Activated CD4-positive, alpha-beta T cell treated with anti-CD3 and anti-CD28 coated beads for 36 hours (primary cell): ENCODE measurements at regions of chr6 and their contacts with region 1.

Region 1: DNA sequence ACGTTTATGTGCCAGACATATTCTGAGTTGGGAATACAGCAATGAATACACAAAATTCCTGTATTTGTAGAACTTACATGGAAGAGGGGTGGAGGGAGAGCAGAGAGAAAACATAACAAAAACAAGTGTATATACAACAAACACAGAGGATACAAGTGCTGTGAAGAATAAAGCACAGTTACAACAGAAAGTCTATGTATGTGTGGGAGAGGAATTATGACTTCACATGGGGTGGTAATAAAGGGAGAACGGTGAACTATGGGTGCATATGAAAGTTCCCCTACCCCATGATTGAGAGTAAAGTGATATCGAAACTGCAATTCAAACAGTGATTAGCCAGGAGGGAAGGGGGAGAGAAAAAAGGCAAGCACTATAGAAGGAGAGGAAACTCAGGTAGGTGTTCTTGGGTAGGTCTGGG is 24.6 kb downstream of the HBS1L start:
- DNase-seq: no peak
- ATAC-seq: peak; percentile 97
- H3K4me3 Mint-ChIP-seq: peak overlapping the region; percentile 54
- H3K27ac Mint-ChIP-seq: peak overlapping the region; percentile 75
- H3K4me1 Mint-ChIP-seq: peaks cover 69% of the 10 kb centered on the region
- H3K27me3 Mint-ChIP-seq: no peaks in the 10 kb centered on the region

Region 2: DNA sequence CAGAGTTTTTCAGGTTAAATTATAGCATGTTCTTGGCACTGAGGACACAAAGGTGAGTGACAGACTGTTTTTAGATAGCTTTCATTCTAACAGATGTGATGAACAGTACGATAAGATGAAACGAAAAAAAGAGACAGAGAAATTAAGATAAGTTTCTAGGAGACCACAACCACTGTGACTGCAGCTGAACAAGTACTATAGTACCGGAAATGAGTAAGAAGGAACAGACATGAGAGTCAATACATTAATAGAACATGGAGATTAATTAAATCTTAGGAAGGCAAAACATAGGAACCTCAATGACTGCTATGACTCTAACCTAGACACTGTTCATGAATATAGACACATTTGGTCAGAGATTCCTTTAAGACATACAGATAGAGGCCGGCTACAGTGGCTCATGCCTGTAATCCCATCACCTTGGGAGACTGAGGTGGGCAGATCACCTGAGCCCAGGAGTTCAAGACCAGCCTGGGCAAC is 15.7 kb before region 1 on chr6:
- CTCF ChIA-PET with region 1: interaction called, 4 read pairs
- POLR2A ChIA-PET with region 1: no interaction called
- intact Hi-C with region 1: loop called (anchors 1 kb)
- DNase-seq: peak; percentile 23
- ATAC-seq: peak; percentile 87
- H3K4me3 Mint-ChIP-seq: peak overlapping the region; percentile 18
- H3K27ac Mint-ChIP-seq: peak overlapping the region; percentile 45
- H3K4me1 Mint-ChIP-seq: peaks cover 59% of the 10 kb centered on the region
- H3K27me3 Mint-ChIP-seq: no peaks in the 10 kb centered on the region

Region 3: GRCh38 chr6:135162678-135163439 is 132.8 kb after region 1 on chr6:
- CTCF ChIA-PET with region 1: no interaction called
- POLR2A ChIA-PET with region 1: no interaction called
- intact Hi-C with region 1: loop called in 1 of 2 experiments (anchors 1 kb)
- DNase-seq: peak; percentile 67
- ATAC-seq: no peak
- H3K4me3 Mint-ChIP-seq: peak overlapping the region; percentile 24
- H3K27ac Mint-ChIP-seq: peak overlapping the region; percentile 94
- H3K4me1 Mint-ChIP-seq: peaks cover 64% of the 10 kb centered on the region
- H3K27me3 Mint-ChIP-seq: no peaks in the 10 kb centered on the region